Ovary (tissue), 10 donors: ENCODE measurements at regions of chr7 and their contacts with region 1.

Region 1: GRCh38 chr7:139777948-139778841 is at the start of gene HIPK2:
- DNase-seq: peak; percentile 73 to 87 (median 81)
- H3K4me3 ChIP-seq: peak within 1 kb of the TSS; percentile 92
- H3K27ac ChIP-seq: peak within 1 kb of the TSS; percentile 88 to 93
- H3K4me1 ChIP-seq: peaks cover 5% of the 10 kb centered on the region
- H3K27me3 ChIP-seq: no peaks in the 10 kb centered on the region
- CTCF ChIP-seq: no peak
- EP300 ChIP-seq: no peak
- POLR2A ChIP-seq: no peak
- total RNA-seq, gene HIPK2: 9.9 to 38.4 (median 35.1) TPM

Region 2: DNA sequence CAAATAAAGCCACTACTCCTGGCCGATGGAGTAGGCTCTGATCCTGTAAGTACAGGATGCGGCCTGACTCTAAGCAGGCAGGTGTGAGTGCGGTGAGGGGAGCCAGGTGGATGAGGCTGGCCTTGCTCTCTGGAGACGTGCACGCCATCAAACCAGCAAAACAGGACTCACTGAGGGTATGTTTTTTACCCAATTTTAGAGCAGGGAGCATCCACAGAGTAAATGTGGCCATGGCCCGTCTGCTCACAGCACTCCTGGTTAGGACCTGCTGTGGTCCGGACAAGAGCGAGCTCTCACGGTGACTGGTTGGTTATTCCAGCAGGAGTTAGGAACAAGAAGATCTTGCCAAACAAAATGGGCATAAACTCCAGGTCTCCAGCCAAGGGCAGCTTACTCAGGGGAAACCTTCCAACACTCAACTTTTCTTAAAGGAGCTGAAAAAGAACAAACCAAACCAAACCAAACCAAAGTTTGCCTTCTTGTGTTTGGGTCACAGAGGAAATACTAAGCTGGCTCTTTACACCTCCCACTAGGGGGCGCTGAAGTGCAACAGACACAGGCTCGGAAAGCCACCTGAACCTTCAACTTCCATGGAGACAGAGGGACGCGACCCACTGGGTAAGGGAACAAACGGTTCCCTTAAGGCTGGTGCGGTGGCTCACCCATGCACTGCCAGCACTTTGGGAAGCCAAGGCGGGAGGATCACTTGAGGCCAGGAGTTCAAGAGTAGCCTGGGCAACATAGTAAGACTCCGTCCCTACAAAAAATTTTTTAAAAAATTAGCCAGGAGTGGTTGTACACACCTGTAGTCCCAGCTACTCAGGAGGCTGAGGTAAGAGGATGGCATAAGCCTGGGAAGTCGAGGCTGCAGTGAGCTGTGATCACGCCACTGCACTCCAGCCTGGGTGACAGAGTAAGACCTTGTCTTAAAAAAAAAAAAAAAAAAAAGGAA is 132.3 kb before region 1 on chr7:
- intact Hi-C with region 1: loop called in 2 of 4 experiments (anchors 5 to 10 kb)
- DNase-seq: peak; percentile 73 to 83 (median 79)
- H3K4me3 ChIP-seq: no peak overlapping the region
- H3K27ac ChIP-seq: no peak overlapping the region
- H3K4me1 ChIP-seq: peaks cover 1% of the 10 kb centered on the region
- H3K27me3 ChIP-seq: no peaks in the 10 kb centered on the region
- CTCF ChIP-seq: peak; percentile 64 to 83 (median 70)
- EP300 ChIP-seq: no peak
- POLR2A ChIP-seq: no peak

Region 3: GRCh38 chr7:139739863-139740597 is 38.2 kb before region 1 on chr7:
- intact Hi-C with region 1: loop called in 1 of 4 experiments (anchors 5 kb)
- DNase-seq: no peak
- H3K4me3 ChIP-seq: no peak overlapping the region
- H3K27ac ChIP-seq: no peak overlapping the region
- H3K4me1 ChIP-seq: peaks cover 11% of the 10 kb centered on the region
- H3K27me3 ChIP-seq: no peaks in the 10 kb centered on the region
- CTCF ChIP-seq: no peak
- EP300 ChIP-seq: no peak
- POLR2A ChIP-seq: no peak